Natural killer cell (primary cell): ENCODE measurements at regions of chr5 and their contacts with region 1.

Region 1: DNA sequence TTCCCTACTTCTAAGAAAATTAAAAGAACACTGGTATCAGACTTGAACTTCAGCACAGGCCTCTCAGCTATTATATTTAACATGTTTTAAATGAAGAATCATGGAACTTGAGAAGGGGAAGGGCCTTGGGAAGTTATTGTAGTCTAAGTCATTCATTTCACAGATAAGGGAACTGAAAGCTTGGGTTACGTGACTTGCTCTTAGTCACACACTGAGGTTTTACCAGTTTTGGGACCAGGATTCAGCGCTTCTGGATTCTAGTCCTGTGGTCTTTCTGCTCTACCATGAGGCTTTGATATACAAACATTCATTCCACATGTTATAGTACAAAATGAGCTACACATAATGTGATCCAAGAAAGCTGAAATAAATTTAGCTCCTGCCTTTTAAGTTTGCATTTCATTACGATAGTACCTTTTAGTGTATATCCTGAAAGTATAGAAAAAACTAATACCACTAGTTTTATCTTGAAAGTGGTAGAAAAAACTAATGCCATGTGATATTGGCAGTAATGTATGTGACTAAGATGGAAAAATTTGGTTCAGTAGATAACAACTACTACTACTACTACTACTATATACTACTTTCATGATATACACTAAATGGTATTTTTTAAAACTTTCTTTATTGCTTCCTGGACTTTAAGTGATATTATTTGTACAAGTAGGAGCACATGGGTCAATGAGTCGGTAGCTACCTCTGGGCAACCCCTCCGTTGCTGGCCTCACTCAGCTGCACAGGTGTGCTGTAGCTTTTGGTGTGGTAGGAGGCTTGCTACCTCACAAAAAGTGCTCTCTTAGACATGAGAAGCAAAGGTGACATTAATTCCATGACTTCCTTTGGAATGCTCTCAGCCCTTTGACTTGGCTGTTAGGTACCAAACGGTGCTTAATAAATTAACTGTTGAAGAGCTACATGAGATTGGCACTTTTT is 40.7 kb downstream of the F2RL2 start:
- DNase-seq: peak in 1 of 2 donors; percentile 12
- ATAC-seq: peak in 1 of 3 donors; percentile 42
- H3K4me3 ChIP-seq: no peak overlapping the region
- H3K4me3 Mint-ChIP-seq: no peak overlapping the region
- H3K27ac ChIP-seq: peak overlapping the region; percentile 14
- H3K27ac Mint-ChIP-seq: peak overlapping the region; percentile 75 to 82
- H3K4me1 ChIP-seq: peaks cover 6% of the 10 kb centered on the region
- H3K4me1 Mint-ChIP-seq: peaks cover 20 to 33% of the 10 kb centered on the region in 2 donors
- H3K27me3 ChIP-seq: no peaks in the 10 kb centered on the region
- H3K27me3 Mint-ChIP-seq: no peaks in the 10 kb centered on the region
- CTCF ChIP-seq: no peak

Region 2: DNA sequence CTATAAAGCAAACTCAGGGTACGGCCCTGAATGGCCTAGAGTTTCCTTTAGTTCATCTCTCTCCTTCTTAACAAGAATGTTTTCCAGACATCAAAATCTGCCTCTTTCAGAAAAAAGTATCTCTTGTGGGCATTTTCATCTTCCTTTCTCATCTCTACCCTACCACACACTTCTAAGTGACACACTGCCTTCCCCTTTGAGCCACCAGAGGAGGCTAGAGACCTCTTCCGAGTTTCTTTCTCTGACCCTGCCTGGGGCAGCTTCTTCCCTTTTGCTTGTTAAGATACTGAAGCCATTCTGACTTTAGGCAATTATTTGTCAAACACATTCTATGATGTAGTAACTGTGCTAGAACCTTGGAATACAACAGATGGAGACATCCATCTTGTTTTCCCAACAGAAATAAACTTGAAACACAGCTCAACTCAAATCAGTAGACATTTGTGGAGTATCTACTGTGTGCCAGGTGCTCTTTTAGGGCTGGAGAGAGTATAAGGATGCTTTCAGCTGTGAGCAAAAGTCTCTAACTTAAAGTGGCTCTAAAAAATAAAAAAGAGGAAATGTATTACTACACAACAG is 507.9 kb before region 1 on chr5:
- intact Hi-C with region 1: loop called (anchors 1 kb)
- DNase-seq: peak in 1 of 2 donors; percentile 56
- ATAC-seq: peak; percentile 58 to 63 (median 62)
- H3K4me3 ChIP-seq: no peak overlapping the region
- H3K4me3 Mint-ChIP-seq: no peak overlapping the region
- H3K27ac ChIP-seq: no peak overlapping the region
- H3K27ac Mint-ChIP-seq: no peak overlapping the region
- H3K4me1 ChIP-seq: no peaks in the 10 kb centered on the region
- H3K4me1 Mint-ChIP-seq: no peaks in the 10 kb centered on the region
- H3K27me3 ChIP-seq: peaks cover 3% of the 10 kb centered on the region
- H3K27me3 Mint-ChIP-seq: peaks cover 60 to 87% of the 10 kb centered on the region in 2 donors
- CTCF ChIP-seq: peak; percentile 45

Region 3: DNA sequence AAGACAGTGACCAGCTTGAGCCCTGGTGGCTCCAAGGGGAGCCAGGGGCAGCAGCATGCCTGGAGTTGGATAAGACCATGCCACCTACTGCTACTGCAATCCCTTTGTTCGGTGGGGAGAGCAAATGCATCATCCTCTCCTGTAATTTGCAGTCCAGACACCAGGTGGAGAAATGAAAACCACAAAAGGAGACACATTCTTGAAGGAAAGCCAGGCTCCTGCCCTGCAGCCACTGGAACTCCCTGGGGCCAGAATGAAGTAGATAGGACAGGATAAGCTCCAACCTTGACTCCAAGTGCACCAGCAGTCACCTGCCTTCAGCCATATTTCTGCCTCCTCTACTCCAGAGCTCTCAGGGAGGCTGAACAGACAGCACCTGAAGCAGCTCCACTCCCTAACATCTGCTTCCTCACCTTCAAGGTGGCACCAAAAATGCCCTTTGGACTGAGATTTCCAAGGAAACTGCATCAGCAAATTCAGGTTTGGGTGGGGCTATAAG is 244.5 kb before region 1 on chr5:
- intact Hi-C with region 1: loop called (anchors 1 kb)
- DNase-seq: peak; percentile 21 to 80
- ATAC-seq: peak; percentile 47 to 85 (median 78)
- H3K4me3 ChIP-seq: no peak overlapping the region
- H3K4me3 Mint-ChIP-seq: no peak overlapping the region
- H3K27ac ChIP-seq: no peak overlapping the region
- H3K27ac Mint-ChIP-seq: peak overlapping the region in 1 of 2 donors; percentile 33
- H3K4me1 ChIP-seq: peaks cover 23% of the 10 kb centered on the region
- H3K4me1 Mint-ChIP-seq: peaks cover 28 to 34% of the 10 kb centered on the region in 2 donors
- H3K27me3 ChIP-seq: no peaks in the 10 kb centered on the region
- H3K27me3 Mint-ChIP-seq: no peaks in the 10 kb centered on the region
- CTCF ChIP-seq: peak; percentile 49